A673 (cell line): ENCODE measurements at regions of chr13 and their contacts with region 1.

Region 1: GRCh38 chr13:49976314-49977258 is 20.3 kb upstream of the TRIM13 start:
- DNase-seq: peak; percentile 79
- H3K4me3 ChIP-seq: no peak overlapping the region
- H3K27ac ChIP-seq: peak overlapping the region; percentile 14
- H3K4me1 ChIP-seq: peaks cover 13% of the 10 kb centered on the region
- H3K27me3 ChIP-seq: no peaks in the 10 kb centered on the region
- CTCF ChIP-seq: peak; percentile 93

Region 2: DNA sequence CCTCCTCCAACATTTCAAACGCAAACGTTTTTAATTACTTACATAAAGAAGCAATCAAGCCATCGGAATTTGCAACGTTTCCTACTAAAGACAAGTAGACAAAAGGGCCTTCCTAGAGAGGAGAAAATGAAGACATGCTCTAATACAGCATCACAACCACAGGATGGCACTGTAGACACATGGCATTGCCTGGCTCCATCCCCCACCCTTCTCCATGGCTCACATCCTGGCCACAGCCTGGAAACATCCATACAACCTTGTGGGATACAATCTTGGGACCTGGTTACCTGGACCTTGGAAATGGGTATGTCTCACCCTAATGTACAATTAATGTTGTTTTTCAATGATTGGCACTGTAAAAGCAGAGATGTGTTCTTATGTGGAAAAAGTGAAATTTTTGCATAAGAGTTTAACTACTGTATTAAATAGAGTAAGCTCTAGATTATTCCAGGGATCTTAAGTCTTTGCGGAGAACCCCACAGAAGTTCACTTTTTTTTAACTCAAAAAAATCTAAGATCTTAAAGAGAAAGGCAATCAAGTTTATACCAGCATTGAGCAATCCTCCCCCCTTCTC is 306.8 kb before region 1 on chr13:
- CTCF ChIA-PET with region 1: no interaction called
- POLR2A ChIA-PET with region 1: no interaction called
- intact Hi-C with region 1: loop called (anchors 5 kb)
- DNase-seq: peak; percentile 67
- H3K4me3 ChIP-seq: no peak overlapping the region
- H3K27ac ChIP-seq: no peak overlapping the region
- H3K4me1 ChIP-seq: peaks cover 11% of the 10 kb centered on the region
- H3K27me3 ChIP-seq: no peaks in the 10 kb centered on the region
- CTCF ChIP-seq: peak; percentile 69

Region 3: DNA sequence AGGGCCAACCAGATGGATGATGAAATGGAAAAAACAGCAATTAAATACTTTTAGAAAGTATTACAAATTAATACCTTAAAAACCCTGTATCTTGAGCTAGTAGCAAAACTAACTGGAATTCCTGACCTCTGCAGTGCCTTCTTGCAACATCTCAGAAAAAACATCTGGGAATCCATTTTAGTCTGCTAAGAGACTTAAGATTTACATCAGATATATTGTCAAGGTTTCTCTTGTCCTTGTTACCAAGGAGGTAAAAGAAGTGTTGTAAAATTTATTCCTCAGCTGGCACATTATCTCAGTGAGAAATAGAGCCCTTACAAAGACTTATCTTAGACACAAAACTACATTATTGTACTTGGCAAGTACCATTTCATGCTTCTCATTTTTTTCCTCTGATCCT is 57.1 kb after region 1 on chr13:
- CTCF ChIA-PET with region 1: interaction called, 14 read pairs
- POLR2A ChIA-PET with region 1: no interaction called
- intact Hi-C with region 1: no loop called
- DNase-seq: no peak
- H3K4me3 ChIP-seq: no peak overlapping the region
- H3K27ac ChIP-seq: no peak overlapping the region
- H3K4me1 ChIP-seq: peaks cover 8% of the 10 kb centered on the region
- H3K27me3 ChIP-seq: no peaks in the 10 kb centered on the region
- CTCF ChIP-seq: no peak

Region 4: GRCh38 chr13:50531917-50532899 is 555.6 kb after region 1 on chr13:
- CTCF ChIA-PET with region 1: no interaction called
- POLR2A ChIA-PET with region 1: no interaction called
- intact Hi-C with region 1: loop called (anchors 2 kb)
- DNase-seq: peak; percentile 42
- H3K4me3 ChIP-seq: no peak overlapping the region
- H3K27ac ChIP-seq: no peak overlapping the region
- H3K4me1 ChIP-seq: no peaks in the 10 kb centered on the region
- H3K27me3 ChIP-seq: no peaks in the 10 kb centered on the region
- CTCF ChIP-seq: peak; percentile 61

Region 5: GRCh38 chr13:50911937-50912795 is 935.6 kb after region 1 on chr13:
- CTCF ChIA-PET with region 1: interaction called, 3 read pairs
- POLR2A ChIA-PET with region 1: no interaction called
- intact Hi-C with region 1: loop called (anchors 5 kb)
- DNase-seq: peak; percentile 89
- H3K4me3 ChIP-seq: peak overlapping the region; percentile 70
- H3K27ac ChIP-seq: no peak overlapping the region
- H3K4me1 ChIP-seq: peaks cover 18% of the 10 kb centered on the region
- H3K27me3 ChIP-seq: no peaks in the 10 kb centered on the region
- CTCF ChIP-seq: peak; percentile 92